Calu3 (cell line): ENCODE measurements at regions of chr14 and their contacts with region 1.

Region 1: DNA sequence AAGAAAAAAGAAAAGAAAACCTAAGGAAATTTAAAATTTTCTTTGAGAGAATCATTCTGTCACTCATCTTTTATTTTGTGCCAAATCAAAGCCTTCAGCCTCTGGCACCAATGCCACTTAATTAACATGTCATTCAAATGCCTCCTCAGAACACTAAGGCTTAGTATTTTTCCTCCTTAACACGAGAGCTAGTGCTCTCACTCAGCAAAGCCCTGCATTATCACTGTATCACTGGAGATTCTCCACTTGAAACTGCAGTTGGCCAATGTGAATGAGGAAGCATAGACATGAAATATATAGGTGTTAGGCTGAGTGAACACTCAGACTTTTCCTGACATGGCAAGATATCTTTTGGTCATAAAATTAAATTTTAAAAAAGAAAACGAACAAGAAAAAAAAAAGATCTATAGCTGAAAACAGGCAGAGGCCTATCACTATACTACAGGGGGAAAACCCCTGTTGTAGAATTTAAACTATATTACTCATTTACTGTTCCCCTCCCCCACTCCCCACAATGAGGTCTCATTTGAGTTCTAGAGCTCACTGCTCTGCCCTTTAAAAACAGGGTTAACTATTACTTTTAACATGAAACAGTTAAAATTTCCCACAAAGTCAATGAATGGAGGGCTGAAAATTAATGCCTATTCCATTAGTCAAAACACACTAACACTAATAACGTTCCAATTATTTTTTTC is 5.1 kb downstream of the MBIP start:
- DNase-seq: no peak
- H3K4me3 Mint-ChIP-seq: no peak overlapping the region
- H3K27ac Mint-ChIP-seq: no peak overlapping the region
- H3K4me1 Mint-ChIP-seq: peaks cover 8% of the 10 kb centered on the region
- H3K27me3 Mint-ChIP-seq: no peaks in the 10 kb centered on the region
- CTCF ChIP-seq: no peak

Region 2: DNA sequence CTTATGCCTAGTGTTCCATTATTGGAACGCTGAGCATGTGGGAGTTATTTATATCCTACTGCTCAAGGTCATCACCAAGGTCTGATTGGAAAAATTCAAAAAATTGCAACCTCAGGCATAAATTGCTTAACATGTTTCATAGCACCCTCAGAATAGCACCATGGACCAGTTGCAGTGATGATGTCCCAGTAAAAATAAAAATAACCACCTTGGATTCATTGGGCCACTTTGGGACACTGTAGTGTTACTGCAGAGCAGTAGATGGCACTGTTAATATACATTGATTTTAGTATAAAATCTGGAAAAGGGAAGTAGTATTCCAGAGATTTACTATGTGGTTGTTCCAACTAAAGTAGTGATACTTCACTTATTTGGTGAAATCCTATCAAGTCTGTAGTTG is 107.8 kb before region 1 on chr14:
- CTCF ChIA-PET with region 1: no interaction called
- intact Hi-C with region 1: loop called (anchors 5 kb)
- DNase-seq: no peak
- H3K4me3 Mint-ChIP-seq: no peak overlapping the region
- H3K27ac Mint-ChIP-seq: no peak overlapping the region
- H3K4me1 Mint-ChIP-seq: no peaks in the 10 kb centered on the region
- H3K27me3 Mint-ChIP-seq: no peaks in the 10 kb centered on the region
- CTCF ChIP-seq: peak; percentile 12

Region 3: GRCh38 chr14:36227802-36228201 is 87.5 kb before region 1 on chr14:
- CTCF ChIA-PET with region 1: no interaction called
- intact Hi-C with region 1: loop called (anchors 5 kb)
- DNase-seq: peak; percentile 31
- H3K4me3 Mint-ChIP-seq: peak overlapping the region; percentile 14
- H3K27ac Mint-ChIP-seq: peak overlapping the region; percentile 74
- H3K4me1 Mint-ChIP-seq: peaks cover 35% of the 10 kb centered on the region
- H3K27me3 Mint-ChIP-seq: no peaks in the 10 kb centered on the region
- CTCF ChIP-seq: no peak

Region 4: GRCh38 chr14:36271939-36272907 is 43.1 kb before region 1 on chr14:
- CTCF ChIA-PET with region 1: no interaction called
- intact Hi-C with region 1: no loop called
- DNase-seq: no peak
- H3K4me3 Mint-ChIP-seq: no peak overlapping the region
- H3K27ac Mint-ChIP-seq: no peak overlapping the region
- H3K4me1 Mint-ChIP-seq: peaks cover 28% of the 10 kb centered on the region
- H3K27me3 Mint-ChIP-seq: peaks cover 8% of the 10 kb centered on the region
- CTCF ChIP-seq: no peak